Activated T-helper 2 cell treated with anti-CD3 and anti-CD28 coated beads, Interferon-gamma antibody, Interleukin-2, Interleukin-4, amounts not matched to agents 10 μg/mL and 5 μg/mL and 100 μg/mL, durations not matched to agents 14 hours and 24 hours and 36 hours (primary cell): ENCODE measurements at regions of chr2 and their contacts with region 1.

Region 1: GRCh38 chr2:11239666-11240462 is 84.6 kb downstream of the SLC66A3 start:
- DNase-seq: no peak
- H3K4me3 Mint-ChIP-seq: no peak overlapping the region
- H3K27ac Mint-ChIP-seq: no peak overlapping the region
- H3K4me1 Mint-ChIP-seq: peaks cover 5% of the 10 kb centered on the region
- H3K27me3 Mint-ChIP-seq: no peaks in the 10 kb centered on the region

Region 2: DNA sequence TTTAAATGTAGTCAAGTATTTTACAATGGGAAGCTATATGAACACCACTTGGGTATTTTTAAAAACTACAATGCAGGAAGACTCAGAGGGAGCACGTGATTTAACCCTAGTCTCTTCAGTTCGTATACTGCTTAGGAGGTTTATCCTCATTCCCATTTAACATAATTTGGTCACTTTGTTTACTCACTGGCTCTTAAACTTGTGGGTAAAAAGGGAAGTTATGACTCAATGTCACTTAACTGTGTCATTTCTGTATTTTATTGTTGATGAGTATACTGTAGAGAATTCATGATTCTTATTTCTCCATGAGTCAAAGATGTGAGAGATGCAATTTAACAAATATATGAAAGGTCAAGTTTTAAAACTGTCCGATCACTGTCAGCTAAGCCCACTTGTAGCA is 36.4 kb before region 1 on chr2:
- intact Hi-C with region 1: loop called (anchors 5 kb)
- DNase-seq: no peak
- H3K4me3 Mint-ChIP-seq: no peak overlapping the region
- H3K27ac Mint-ChIP-seq: peak overlapping the region; percentile 55
- H3K4me1 Mint-ChIP-seq: peaks cover 19% of the 10 kb centered on the region
- H3K27me3 Mint-ChIP-seq: no peaks in the 10 kb centered on the region

Region 3: DNA sequence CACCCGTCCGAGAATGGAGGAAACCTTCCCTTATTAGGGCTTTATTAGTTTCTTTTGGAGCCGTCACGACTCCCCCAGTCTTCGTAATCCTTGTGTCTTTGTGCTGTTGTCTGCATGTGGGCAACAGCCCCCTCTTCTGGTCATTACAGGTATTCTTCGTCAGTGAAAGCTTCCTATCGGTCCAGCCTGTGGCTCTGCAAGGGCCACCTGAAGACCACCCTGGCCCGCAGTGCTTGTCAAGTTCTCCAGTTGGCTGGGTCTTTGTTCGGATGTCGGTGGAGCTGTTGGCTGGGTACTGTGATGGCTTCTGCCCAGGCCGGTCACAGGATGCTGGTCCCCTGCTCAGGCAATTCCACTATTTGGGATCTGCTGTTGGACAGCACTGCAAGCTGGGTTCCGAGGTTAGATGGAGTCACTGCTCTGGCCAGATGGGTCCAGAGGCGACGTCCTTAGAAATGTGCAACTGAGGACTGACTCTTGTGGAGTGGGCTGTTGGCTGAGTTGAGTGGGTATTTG is 206.9 kb after region 1 on chr2:
- intact Hi-C with region 1: loop called (anchors 5 kb)
- DNase-seq: peak; percentile 12
- H3K4me3 Mint-ChIP-seq: no peak overlapping the region
- H3K27ac Mint-ChIP-seq: no peak overlapping the region
- H3K4me1 Mint-ChIP-seq: no peaks in the 10 kb centered on the region
- H3K27me3 Mint-ChIP-seq: no peaks in the 10 kb centered on the region